MCF 10A (cell line): ENCODE measurements at regions of chr2 and their contacts with region 1.

Region 1: DNA sequence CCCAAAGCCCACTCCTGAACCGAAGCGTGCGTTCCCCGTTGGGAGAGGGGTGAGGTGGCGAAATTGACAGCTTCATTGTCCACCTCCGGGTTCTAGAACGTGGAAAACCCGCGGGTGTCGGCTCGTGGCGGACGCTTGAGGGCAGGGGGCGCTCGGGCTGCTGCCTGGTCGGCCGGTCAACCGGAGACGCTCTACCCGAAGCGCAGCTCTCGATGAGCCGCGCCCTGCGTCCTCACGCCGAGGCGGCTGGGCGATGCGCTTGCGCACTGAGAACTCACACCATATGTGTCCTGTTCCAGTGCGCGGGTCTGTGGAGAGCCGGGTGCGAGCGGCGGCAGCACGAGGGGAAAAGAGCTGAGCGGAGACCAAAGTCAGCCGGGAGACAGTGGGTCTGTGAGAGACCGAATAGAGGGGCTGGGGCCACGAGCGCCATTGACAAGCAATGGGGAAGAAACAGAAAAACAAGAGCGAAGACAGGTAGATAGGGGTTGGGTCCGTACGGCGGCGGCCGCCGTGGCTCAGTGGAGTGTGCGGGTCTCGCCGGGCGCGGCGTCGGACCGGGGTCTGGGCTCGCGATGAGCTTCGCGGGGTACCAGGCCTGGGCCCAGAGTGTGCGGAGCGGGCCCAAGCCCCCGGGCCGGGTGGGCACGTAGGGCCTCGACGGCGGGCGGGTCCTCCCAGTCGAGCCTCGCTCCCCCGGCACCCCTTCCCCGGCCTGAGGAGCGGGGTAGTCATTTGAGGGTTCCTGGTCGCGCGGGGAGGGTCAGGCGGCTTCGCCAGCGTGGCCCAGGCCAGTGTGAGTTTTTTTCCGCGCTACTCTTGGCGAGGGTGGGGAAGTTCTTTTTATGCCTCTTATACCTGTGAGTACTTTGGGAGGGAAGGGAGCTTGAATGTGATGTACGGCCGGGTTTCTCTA is at the start of gene EIF5B:
- DNase-seq: peak; percentile 96
- H3K4me3 Mint-ChIP-seq: no peak within 1 kb of the TSS
- H3K27ac Mint-ChIP-seq: no peak within 1 kb of the TSS
- H3K4me1 Mint-ChIP-seq: peaks cover 20% of the 10 kb centered on the region
- H3K27me3 Mint-ChIP-seq: no peaks in the 10 kb centered on the region
- CTCF ChIP-seq: peak; percentile 42
- total RNA-seq, gene EIF5B: 45.6 and 55.5 TPM in 2 replicates

Region 2: GRCh38 chr2:98608116-98608999 is 729.0 kb before region 1 on chr2 and contains the starts of genes COA5 and UNC50:
- CTCF ChIA-PET with region 1: no interaction called
- POLR2A ChIA-PET with region 1: interaction called, 15 read pairs
- intact Hi-C with region 1: no loop called
- DNase-seq: peak; percentile 86
- H3K4me3 Mint-ChIP-seq: peak within 1 kb of the TSS; percentile 93
- H3K27ac Mint-ChIP-seq: peak within 1 kb of the TSS; percentile 98
- H3K4me1 Mint-ChIP-seq: peaks cover 40% of the 10 kb centered on the region
- H3K27me3 Mint-ChIP-seq: no peaks in the 10 kb centered on the region
- CTCF ChIP-seq: no peak
- total RNA-seq, gene COA5: 22.8 and 29.6 TPM in 2 replicates
- total RNA-seq, gene UNC50: 36.9 and 56.4 TPM in 2 replicates

Region 3: GRCh38 chr2:99154643-99155536 is 182.5 kb before region 1 on chr2 and contains the starts of genes LIPT1 and TSGA10:
- CTCF ChIA-PET with region 1: interaction called, 3 read pairs
- POLR2A ChIA-PET with region 1: interaction called, 74 read pairs
- intact Hi-C with region 1: loop called (anchors 5 kb)
- DNase-seq: peak; percentile 89
- H3K4me3 Mint-ChIP-seq: no peak within 1 kb of the TSS
- H3K27ac Mint-ChIP-seq: peak within 1 kb of the TSS; percentile 95
- H3K4me1 Mint-ChIP-seq: peaks cover 31% of the 10 kb centered on the region
- H3K27me3 Mint-ChIP-seq: no peaks in the 10 kb centered on the region
- CTCF ChIP-seq: no peak
- total RNA-seq, gene LIPT1: 13.1 TPM in 2 replicates
- total RNA-seq, gene TSGA10: 7.9 and 11.6 TPM in 2 replicates

Region 4: GRCh38 chr2:99180755-99181623 is 156.4 kb before region 1 on chr2 and contains the starts of genes MITD1 and MRPL30:
- CTCF ChIA-PET with region 1: interaction called, 11 read pairs
- POLR2A ChIA-PET with region 1: interaction called, 154 read pairs
- intact Hi-C with region 1: loop called (anchors 1 kb)
- DNase-seq: peak; percentile 96
- H3K4me3 Mint-ChIP-seq: peak within 1 kb of the TSS; percentile 87
- H3K27ac Mint-ChIP-seq: peak within 1 kb of the TSS; percentile 86
- H3K4me1 Mint-ChIP-seq: peaks cover 30% of the 10 kb centered on the region
- H3K27me3 Mint-ChIP-seq: no peaks in the 10 kb centered on the region
- CTCF ChIP-seq: no peak
- total RNA-seq, gene MITD1: 19.1 and 21.2 TPM in 2 replicates
- total RNA-seq, gene MRPL30: 39.1 and 42.5 TPM in 2 replicates

Region 5: DNA sequence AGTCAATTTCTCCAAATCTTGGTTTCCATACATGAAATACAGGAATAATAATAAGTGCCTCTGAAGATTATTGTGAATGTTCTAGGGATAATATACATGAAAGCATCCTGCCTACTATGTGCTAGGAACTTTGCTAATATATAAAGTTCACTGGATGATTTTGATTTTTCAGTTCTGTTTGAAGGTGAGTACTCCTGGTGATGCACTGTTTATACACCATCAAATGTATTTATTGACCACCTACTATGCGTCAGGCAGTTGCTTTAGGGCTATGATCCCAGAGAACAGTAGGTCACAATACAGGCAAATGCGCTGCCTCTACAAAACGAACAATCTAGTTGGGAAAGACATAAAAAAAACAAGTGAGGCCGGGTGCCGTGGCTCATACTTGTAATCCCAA is 12.0 kb before region 1 on chr2:
- CTCF ChIA-PET with region 1: interaction called, 10 read pairs
- POLR2A ChIA-PET with region 1: interaction called, 26 read pairs
- intact Hi-C with region 1: no loop called
- DNase-seq: no peak
- H3K4me3 Mint-ChIP-seq: no peak overlapping the region
- H3K27ac Mint-ChIP-seq: no peak overlapping the region
- H3K4me1 Mint-ChIP-seq: no peaks in the 10 kb centered on the region
- H3K27me3 Mint-ChIP-seq: no peaks in the 10 kb centered on the region
- CTCF ChIP-seq: no peak

Region 6: DNA sequence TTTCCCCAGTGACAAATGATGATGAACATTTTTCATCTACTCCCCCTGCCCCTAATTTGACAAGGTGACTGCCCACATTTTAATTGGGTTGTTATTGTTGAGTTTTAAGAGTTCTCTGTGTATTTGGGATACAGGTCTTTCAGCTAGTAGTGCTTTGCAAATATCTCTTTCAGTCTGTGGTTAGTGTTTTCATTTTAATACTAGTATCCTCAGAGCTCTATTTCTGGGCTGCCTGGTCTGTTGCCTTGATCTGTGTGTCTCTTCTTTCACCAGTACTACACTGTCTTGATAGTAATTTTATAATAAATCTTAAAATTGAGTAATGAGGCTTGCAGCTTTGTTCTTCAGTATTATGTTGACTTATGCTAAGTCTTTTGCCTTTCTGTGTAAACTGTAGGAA is 19.5 kb after region 1 on chr2:
- CTCF ChIA-PET with region 1: interaction called, 10 read pairs
- POLR2A ChIA-PET with region 1: interaction called, 9 read pairs
- intact Hi-C with region 1: no loop called
- DNase-seq: no peak
- H3K4me3 Mint-ChIP-seq: no peak overlapping the region
- H3K27ac Mint-ChIP-seq: no peak overlapping the region
- H3K4me1 Mint-ChIP-seq: peaks cover 12% of the 10 kb centered on the region
- H3K27me3 Mint-ChIP-seq: no peaks in the 10 kb centered on the region
- CTCF ChIP-seq: no peak

Region 7: GRCh38 chr2:99481941-99482340 is 144.6 kb after region 1 on chr2:
- CTCF ChIA-PET with region 1: interaction called, 4 read pairs
- POLR2A ChIA-PET with region 1: interaction called, 14 read pairs
- intact Hi-C with region 1: no loop called
- DNase-seq: no peak
- H3K4me3 Mint-ChIP-seq: no peak overlapping the region
- H3K27ac Mint-ChIP-seq: peak overlapping the region; percentile 83
- H3K4me1 Mint-ChIP-seq: peaks cover 39% of the 10 kb centered on the region
- H3K27me3 Mint-ChIP-seq: no peaks in the 10 kb centered on the region
- CTCF ChIP-seq: no peak